B cell (primary cell): ENCODE measurements at regions of chr2 and their contacts with region 1.

Region 1: DNA sequence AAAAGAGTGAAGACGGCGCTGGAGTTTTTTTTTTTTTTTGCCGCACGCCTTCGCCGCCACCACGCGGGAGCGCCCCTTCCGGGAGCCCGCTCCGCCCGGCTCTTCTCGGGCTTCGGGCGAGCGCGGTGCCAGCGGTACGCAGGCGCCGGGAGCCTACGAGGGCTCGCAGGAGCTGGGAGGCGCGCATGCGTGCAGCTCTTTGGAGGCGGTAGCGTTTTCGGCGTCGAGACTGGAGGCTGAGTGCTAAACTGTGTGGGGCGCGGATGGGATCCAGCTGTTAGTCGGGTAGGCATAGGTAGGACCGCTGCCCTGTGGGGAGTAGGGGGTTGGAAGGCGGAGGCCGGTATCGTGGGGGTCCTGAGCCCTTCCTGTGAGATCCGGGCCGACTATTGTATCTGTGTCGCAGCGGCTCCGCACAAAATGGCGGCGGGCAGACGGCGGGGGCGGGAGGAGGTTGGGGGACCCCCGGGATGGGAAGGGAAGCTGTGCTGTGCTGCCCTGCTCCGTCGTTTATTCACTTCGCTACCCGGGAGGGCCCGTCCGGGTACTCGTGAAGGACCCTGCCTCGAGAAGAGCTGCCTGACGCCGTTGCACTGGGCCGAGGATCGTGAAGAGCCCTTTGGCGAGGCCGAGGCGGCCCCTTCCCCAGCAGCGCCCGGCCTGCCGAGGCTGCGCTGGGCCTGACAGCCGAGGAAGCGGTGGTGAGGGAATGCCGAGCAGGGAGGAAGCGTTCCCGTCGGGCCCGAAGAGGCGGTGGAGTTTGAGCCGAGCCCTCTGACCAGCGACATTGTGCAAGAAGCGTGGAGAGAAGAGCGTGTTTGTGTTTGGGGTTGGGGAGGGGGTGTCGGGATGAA is at the start of gene ZNF638:
- DNase-seq: peak; percentile 97
- ATAC-seq: peak; percentile 97
- H3K4me3 ChIP-seq: peak within 1 kb of the TSS; percentile 85 to 92 (median 90)
- H3K4me3 Mint-ChIP-seq: peak within 1 kb of the TSS; percentile 99
- H3K27ac ChIP-seq: peak within 1 kb of the TSS; percentile 88 to 91
- H3K27ac Mint-ChIP-seq: peak within 1 kb of the TSS; percentile 100
- H3K4me1 ChIP-seq: peaks cover 21 to 22% of the 10 kb centered on the region in 2 donors
- H3K4me1 Mint-ChIP-seq: peaks cover 37% of the 10 kb centered on the region
- H3K27me3 ChIP-seq: no peaks in the 10 kb centered on the region
- H3K27me3 Mint-ChIP-seq: no peaks in the 10 kb centered on the region
- CTCF ChIP-seq: peak; percentile 82
- total RNA-seq, gene ZNF638: 221 and 227 TPM in 2 replicates

Region 2: DNA sequence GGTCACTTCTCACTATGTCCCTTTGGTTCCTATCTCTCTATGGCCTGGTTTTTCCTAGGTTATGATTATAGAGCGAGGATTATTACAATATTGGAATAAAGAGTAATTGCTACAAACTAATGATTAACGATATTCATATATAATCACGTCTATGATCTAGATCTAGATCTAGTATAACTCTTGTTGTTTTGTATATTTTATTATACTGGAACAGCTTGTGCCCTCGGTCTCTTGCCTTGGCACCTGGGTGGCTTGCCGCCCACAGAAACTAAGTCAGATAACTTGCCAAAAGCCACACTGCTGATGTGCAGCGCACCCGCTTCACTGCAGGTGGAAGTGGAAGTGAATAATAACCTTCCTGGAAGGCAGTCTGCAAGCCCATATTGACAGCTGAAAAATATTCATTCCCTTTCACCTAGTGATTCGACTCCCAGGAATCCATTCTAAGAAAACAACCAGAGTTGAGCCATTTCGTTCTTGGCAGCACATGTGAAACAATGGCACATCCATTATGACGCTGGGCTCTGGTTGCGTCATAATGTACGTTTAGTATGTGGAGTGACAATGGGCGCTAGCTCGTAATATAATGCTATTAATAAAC is 354.1 kb before region 1 on chr2:
- CTCF ChIA-PET with region 1: no interaction called
- POLR2A ChIA-PET with region 1: interaction called, 3 read pairs
- intact Hi-C with region 1: loop called (anchors 5 kb)
- DNase-seq: peak; percentile 57
- ATAC-seq: no peak
- H3K4me3 ChIP-seq: peak overlapping the region; percentile 52 to 84 (median 64)
- H3K4me3 Mint-ChIP-seq: peak overlapping the region; percentile 95
- H3K27ac ChIP-seq: peak overlapping the region; percentile 43 to 79
- H3K27ac Mint-ChIP-seq: peak overlapping the region; percentile 93
- H3K4me1 ChIP-seq: peaks cover 16 to 22% of the 10 kb centered on the region in 2 donors
- H3K4me1 Mint-ChIP-seq: peaks cover 22% of the 10 kb centered on the region
- H3K27me3 ChIP-seq: no peaks in the 10 kb centered on the region
- H3K27me3 Mint-ChIP-seq: peaks cover 15% of the 10 kb centered on the region
- CTCF ChIP-seq: no peak

Region 3: GRCh38 chr2:71130113-71130904 is 201.5 kb before region 1 on chr2 and contains the starts of genes MCEE and MPHOSPH10:
- CTCF ChIA-PET with region 1: interaction called, 5 read pairs
- POLR2A ChIA-PET with region 1: interaction called, 4 read pairs
- intact Hi-C with region 1: loop called (anchors 2 kb)
- DNase-seq: peak; percentile 92
- ATAC-seq: peak; percentile 93
- H3K4me3 ChIP-seq: peak within 1 kb of the TSS; percentile 82 to 97 (median 90)
- H3K4me3 Mint-ChIP-seq: no peak within 1 kb of the TSS
- H3K27ac ChIP-seq: peak within 1 kb of the TSS; percentile 73 to 81
- H3K27ac Mint-ChIP-seq: no peak within 1 kb of the TSS
- H3K4me1 ChIP-seq: peaks cover 20 to 25% of the 10 kb centered on the region in 2 donors
- H3K4me1 Mint-ChIP-seq: peaks cover 19% of the 10 kb centered on the region
- H3K27me3 ChIP-seq: no peaks in the 10 kb centered on the region
- H3K27me3 Mint-ChIP-seq: no peaks in the 10 kb centered on the region
- CTCF ChIP-seq: no peak
- total RNA-seq, gene MCEE: 17.6 and 21.7 TPM in 2 replicates
- total RNA-seq, gene MPHOSPH10: 45.8 and 51.8 TPM in 2 replicates

Region 4: GRCh38 chr2:71276311-71277146 is 55.3 kb before region 1 on chr2:
- CTCF ChIA-PET with region 1: interaction called, 9 read pairs
- POLR2A ChIA-PET with region 1: interaction called, 4 read pairs
- intact Hi-C with region 1: loop called (anchors 1 kb)
- DNase-seq: peak; percentile 90
- ATAC-seq: peak; percentile 99
- H3K4me3 ChIP-seq: peak overlapping the region; percentile 23 to 77 (median 58)
- H3K4me3 Mint-ChIP-seq: peak overlapping the region; percentile 87
- H3K27ac ChIP-seq: no peak overlapping the region
- H3K27ac Mint-ChIP-seq: peak overlapping the region; percentile 24
- H3K4me1 ChIP-seq: peaks cover 18 to 19% of the 10 kb centered on the region in 2 donors
- H3K4me1 Mint-ChIP-seq: peaks cover 22% of the 10 kb centered on the region
- H3K27me3 ChIP-seq: peaks cover 0 to 19% (median 9%) of the 10 kb centered on the region in 4 experiments
- H3K27me3 Mint-ChIP-seq: peaks cover 54% of the 10 kb centered on the region
- CTCF ChIP-seq: no peak

Region 5: DNA sequence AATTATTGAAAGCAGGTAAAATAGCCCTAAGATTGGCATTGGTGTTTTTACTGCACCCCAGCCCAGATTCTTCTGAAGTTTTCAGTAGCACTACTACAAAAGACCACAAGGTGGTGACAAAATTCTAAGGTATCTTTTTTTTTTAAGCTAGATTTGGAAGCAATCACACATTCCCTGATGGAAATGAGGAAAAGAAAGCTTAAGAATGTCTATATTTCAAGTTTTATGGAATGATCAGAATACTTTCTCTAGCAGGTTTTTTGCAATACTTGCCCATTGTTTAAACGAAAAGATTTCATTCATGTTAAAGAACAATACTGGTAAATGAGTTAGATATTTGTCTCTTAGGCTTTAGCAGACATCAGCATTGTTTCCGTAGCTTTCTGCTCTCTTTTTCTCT is 32.3 kb before region 1 on chr2:
- CTCF ChIA-PET with region 1: interaction called, 38 read pairs
- POLR2A ChIA-PET with region 1: no interaction called
- intact Hi-C with region 1: no loop called
- DNase-seq: peak; percentile 57
- ATAC-seq: no peak
- H3K4me3 ChIP-seq: no peak overlapping the region
- H3K4me3 Mint-ChIP-seq: no peak overlapping the region
- H3K27ac ChIP-seq: no peak overlapping the region
- H3K27ac Mint-ChIP-seq: no peak overlapping the region
- H3K4me1 ChIP-seq: no peaks in the 10 kb centered on the region
- H3K4me1 Mint-ChIP-seq: no peaks in the 10 kb centered on the region
- H3K27me3 ChIP-seq: no peaks in the 10 kb centered on the region
- H3K27me3 Mint-ChIP-seq: no peaks in the 10 kb centered on the region
- CTCF ChIP-seq: peak; percentile 94

Region 6: GRCh38 chr2:71372042-71372441 is 40.2 kb after region 1 on chr2:
- CTCF ChIA-PET with region 1: interaction called, 3 read pairs
- POLR2A ChIA-PET with region 1: no interaction called
- intact Hi-C with region 1: loop called (anchors 5 kb)
- DNase-seq: no peak
- ATAC-seq: no peak
- H3K4me3 ChIP-seq: no peak overlapping the region
- H3K4me3 Mint-ChIP-seq: no peak overlapping the region
- H3K27ac ChIP-seq: no peak overlapping the region
- H3K27ac Mint-ChIP-seq: no peak overlapping the region
- H3K4me1 ChIP-seq: no peaks in the 10 kb centered on the region
- H3K4me1 Mint-ChIP-seq: peaks cover 2% of the 10 kb centered on the region
- H3K27me3 ChIP-seq: no peaks in the 10 kb centered on the region
- H3K27me3 Mint-ChIP-seq: no peaks in the 10 kb centered on the region
- CTCF ChIP-seq: no peak

Region 7: GRCh38 chr2:71417300-71418202 is 85.7 kb after region 1 on chr2:
- CTCF ChIA-PET with region 1: no interaction called
- POLR2A ChIA-PET with region 1: no interaction called
- intact Hi-C with region 1: loop called (anchors 5 kb)
- DNase-seq: peak; percentile 59
- ATAC-seq: peak; percentile 47
- H3K4me3 ChIP-seq: peak overlapping the region in 4 of 5 experiments; percentile 36 to 57 (median 48)
- H3K4me3 Mint-ChIP-seq: peak overlapping the region; percentile 91
- H3K27ac ChIP-seq: peak overlapping the region; percentile 41 to 83
- H3K27ac Mint-ChIP-seq: peak overlapping the region; percentile 91
- H3K4me1 ChIP-seq: peaks cover 5% of the 10 kb centered on the region in 2 donors
- H3K4me1 Mint-ChIP-seq: peaks cover 7% of the 10 kb centered on the region
- H3K27me3 ChIP-seq: no peaks in the 10 kb centered on the region
- H3K27me3 Mint-ChIP-seq: no peaks in the 10 kb centered on the region
- CTCF ChIP-seq: no peak